ENCODE measurements at regions of chr5 and their contacts with region 1.

Region 1: DNA sequence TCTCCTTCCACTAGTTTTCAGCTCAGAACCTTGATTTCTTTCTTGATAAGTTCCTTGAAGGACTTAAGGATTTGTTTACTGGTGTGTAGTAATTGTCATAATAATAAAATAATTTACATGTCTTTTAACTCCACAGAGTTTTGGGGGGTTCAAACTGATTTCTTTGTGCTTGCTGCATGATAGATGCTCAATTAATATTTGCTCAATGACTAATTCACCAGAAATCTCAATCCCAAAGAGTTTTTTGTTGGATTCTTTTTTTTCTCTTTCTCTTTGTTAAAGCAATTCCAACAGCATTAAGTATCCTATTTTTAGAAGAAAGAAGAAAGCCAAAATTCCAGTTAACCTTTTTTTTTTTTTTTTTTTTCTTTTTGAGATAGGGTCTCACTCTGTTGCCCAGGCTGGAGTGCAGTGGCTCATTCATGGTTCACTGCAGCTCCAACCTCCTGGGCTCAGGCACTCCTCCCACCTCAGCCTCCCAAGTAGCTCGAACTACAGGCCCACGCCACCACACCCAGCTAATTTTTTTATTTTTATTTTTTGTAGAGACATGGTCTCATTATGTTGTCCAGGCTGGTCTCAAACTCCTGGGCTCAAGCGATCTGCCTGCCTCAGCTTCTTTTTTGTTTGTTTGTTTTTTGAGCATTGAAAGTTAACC is 10.8 kb downstream of the FAF2 start:
- DNase-seq: no peak
- H3K4me3 ChIP-seq: no peak overlapping the region
- H3K27ac ChIP-seq: no peak overlapping the region
- H3K27me3 ChIP-seq: no peaks in the 10 kb centered on the region
- CTCF ChIP-seq: no peak

Region 2: GRCh38 chr5:176492431-176492830 is 33.4 kb after region 1 on chr5:
- CTCF ChIA-PET with region 1: interaction called, 14 read pairs
- POLR2A ChIA-PET with region 1: no interaction called
- DNase-seq: no peak
- H3K4me3 ChIP-seq: no peak overlapping the region
- H3K27ac ChIP-seq: no peak overlapping the region
- H3K27me3 ChIP-seq: no peaks in the 10 kb centered on the region
- CTCF ChIP-seq: no peak

Region 3: GRCh38 chr5:176647030-176647866 is 188.2 kb after region 1 on chr5 and contains the start of gene TSPAN17:
- CTCF ChIA-PET with region 1: no interaction called
- POLR2A ChIA-PET with region 1: no interaction called
- DNase-seq: peak; percentile 96
- H3K4me3 ChIP-seq: peak within 1 kb of the TSS; percentile 86
- H3K27ac ChIP-seq: peak within 1 kb of the TSS; percentile 31
- H3K27me3 ChIP-seq: no peaks in the 10 kb centered on the region
- CTCF ChIP-seq: peak; percentile 38
- polyA plus RNA-seq, gene TSPAN17: 40.9 and 44.3 TPM in 2 replicates